Activated CD4-positive, alpha-beta memory T cell treated with anti-CD3 and anti-CD28 coated beads for 36 hours (primary cell): ENCODE measurements at regions of chr3 and their contacts with region 1.

Region 1: DNA sequence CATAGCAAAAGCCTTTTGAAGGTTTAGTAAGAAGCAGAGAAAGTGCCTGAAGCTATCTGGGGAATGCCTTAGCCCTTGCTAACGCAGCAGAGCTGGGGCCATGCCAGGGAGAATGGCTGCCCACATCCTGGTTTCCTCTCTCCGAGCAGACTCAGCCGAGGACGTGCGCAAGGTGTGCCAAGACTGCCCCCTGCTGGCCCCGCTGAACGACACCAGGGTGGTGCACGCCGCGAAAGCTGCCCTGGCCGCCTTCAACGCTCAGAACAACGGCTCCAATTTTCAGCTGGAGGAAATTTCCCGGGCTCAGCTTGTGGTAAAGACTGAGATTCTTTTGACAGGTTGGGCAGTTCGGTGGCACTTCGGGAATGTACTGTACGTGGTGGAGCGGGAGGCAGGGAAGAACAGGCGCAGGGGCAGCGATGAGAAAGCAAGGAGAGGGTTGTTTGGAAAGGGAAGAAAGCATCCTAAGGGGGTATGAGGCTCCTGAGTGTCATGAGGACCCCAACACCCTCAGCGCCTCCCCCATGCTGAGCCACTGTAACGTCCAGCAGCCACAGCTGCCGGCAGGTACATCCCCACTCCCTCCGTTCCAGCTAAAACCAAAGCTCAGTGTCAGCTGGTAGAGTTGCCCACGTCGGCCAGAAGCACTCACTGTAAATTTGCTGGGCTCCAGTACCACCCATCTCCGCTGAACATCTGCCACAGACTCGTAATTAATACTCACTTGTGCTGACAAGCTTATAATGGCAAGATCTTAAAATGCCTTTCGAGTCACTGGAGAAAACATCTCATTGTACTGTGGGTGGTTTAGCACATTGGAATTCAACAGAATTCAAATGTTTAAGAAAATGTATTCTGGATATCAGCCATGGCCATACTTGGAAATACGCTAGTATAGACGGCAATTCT is 4.4 kb downstream of the AHSG start:
- DNase-seq: peak; percentile 95
- H3K4me3 Mint-ChIP-seq: peak overlapping the region; percentile 62
- H3K27ac Mint-ChIP-seq: peak overlapping the region; percentile 70
- H3K4me1 Mint-ChIP-seq: peaks cover 20% of the 10 kb centered on the region
- H3K27me3 Mint-ChIP-seq: peaks cover 24% of the 10 kb centered on the region

Region 2: GRCh38 chr3:185942907-185943759 is 674.2 kb before region 1 on chr3:
- CTCF ChIA-PET with region 1: interaction called, 26 read pairs
- POLR2A ChIA-PET with region 1: interaction called, 4 read pairs
- intact Hi-C with region 1: no loop called
- DNase-seq: peak; percentile 91
- H3K4me3 Mint-ChIP-seq: no peak overlapping the region
- H3K27ac Mint-ChIP-seq: no peak overlapping the region
- H3K4me1 Mint-ChIP-seq: peaks cover 14% of the 10 kb centered on the region
- H3K27me3 Mint-ChIP-seq: no peaks in the 10 kb centered on the region

Region 3: DNA sequence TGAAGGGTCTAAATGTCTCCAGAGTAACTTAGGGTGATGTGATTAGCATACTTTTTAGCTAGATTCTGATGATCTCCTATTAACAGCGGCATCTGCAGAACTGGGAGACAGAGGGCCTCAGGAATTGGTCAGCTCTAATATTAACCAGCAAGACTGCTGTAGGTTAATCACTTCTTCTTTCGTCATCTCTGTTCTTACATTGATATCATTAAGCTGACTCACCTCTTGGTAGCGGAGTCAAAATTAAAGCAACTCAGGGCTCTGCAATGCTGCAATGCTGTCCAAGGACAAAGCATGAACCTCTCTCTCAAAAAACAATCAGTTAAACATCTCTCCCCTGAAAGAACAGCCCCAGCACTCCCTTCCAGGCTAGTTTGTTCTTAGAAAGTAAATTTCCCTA is 621.9 kb before region 1 on chr3:
- CTCF ChIA-PET with region 1: interaction called, 10 read pairs
- POLR2A ChIA-PET with region 1: no interaction called
- intact Hi-C with region 1: no loop called
- DNase-seq: no peak
- H3K4me3 Mint-ChIP-seq: no peak overlapping the region
- H3K27ac Mint-ChIP-seq: no peak overlapping the region
- H3K4me1 Mint-ChIP-seq: no peaks in the 10 kb centered on the region
- H3K27me3 Mint-ChIP-seq: peaks cover 7% of the 10 kb centered on the region

Region 4: GRCh38 chr3:186413615-186414415 is 203.5 kb before region 1 on chr3:
- CTCF ChIA-PET with region 1: no interaction called
- POLR2A ChIA-PET with region 1: no interaction called
- intact Hi-C with region 1: loop called (anchors 10 kb)
- DNase-seq: peak; percentile 61
- H3K4me3 Mint-ChIP-seq: peak overlapping the region; percentile 55
- H3K27ac Mint-ChIP-seq: no peak overlapping the region
- H3K4me1 Mint-ChIP-seq: peaks cover 45% of the 10 kb centered on the region
- H3K27me3 Mint-ChIP-seq: no peaks in the 10 kb centered on the region

Region 5: GRCh38 chr3:186589856-186590579 is 27.3 kb before region 1 on chr3:
- CTCF ChIA-PET with region 1: interaction called, 20 read pairs
- POLR2A ChIA-PET with region 1: no interaction called
- intact Hi-C with region 1: loop called (anchors 2 kb)
- DNase-seq: peak; percentile 29
- H3K4me3 Mint-ChIP-seq: no peak overlapping the region
- H3K27ac Mint-ChIP-seq: peak overlapping the region; percentile 26
- H3K4me1 Mint-ChIP-seq: peaks cover 22% of the 10 kb centered on the region
- H3K27me3 Mint-ChIP-seq: no peaks in the 10 kb centered on the region

Region 6: DNA sequence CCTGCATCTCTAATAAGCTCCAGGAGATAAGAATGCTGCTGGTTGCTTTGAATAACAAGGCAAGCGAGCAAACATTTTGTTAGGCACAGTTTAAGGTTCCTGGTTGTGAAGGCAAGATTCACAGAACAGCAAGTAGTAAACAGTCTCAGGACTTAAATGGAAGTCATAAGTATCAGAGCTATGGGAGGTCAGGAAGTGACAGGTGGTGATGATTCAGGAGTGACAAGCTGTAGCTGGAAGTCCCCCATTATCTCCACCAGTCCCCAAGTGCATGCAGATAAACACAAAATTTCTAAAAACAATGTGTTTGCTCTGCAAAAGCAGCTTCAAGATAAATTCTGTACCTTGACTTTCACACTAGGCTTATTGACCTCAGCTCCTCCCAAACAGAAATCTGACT is 26.2 kb after region 1 on chr3:
- CTCF ChIA-PET with region 1: interaction called, 25 read pairs
- POLR2A ChIA-PET with region 1: interaction called, 3 read pairs
- intact Hi-C with region 1: no loop called
- DNase-seq: peak; percentile 36
- H3K4me3 Mint-ChIP-seq: no peak overlapping the region
- H3K27ac Mint-ChIP-seq: no peak overlapping the region
- H3K4me1 Mint-ChIP-seq: peaks cover 23% of the 10 kb centered on the region
- H3K27me3 Mint-ChIP-seq: peaks cover 18% of the 10 kb centered on the region

Region 7: DNA sequence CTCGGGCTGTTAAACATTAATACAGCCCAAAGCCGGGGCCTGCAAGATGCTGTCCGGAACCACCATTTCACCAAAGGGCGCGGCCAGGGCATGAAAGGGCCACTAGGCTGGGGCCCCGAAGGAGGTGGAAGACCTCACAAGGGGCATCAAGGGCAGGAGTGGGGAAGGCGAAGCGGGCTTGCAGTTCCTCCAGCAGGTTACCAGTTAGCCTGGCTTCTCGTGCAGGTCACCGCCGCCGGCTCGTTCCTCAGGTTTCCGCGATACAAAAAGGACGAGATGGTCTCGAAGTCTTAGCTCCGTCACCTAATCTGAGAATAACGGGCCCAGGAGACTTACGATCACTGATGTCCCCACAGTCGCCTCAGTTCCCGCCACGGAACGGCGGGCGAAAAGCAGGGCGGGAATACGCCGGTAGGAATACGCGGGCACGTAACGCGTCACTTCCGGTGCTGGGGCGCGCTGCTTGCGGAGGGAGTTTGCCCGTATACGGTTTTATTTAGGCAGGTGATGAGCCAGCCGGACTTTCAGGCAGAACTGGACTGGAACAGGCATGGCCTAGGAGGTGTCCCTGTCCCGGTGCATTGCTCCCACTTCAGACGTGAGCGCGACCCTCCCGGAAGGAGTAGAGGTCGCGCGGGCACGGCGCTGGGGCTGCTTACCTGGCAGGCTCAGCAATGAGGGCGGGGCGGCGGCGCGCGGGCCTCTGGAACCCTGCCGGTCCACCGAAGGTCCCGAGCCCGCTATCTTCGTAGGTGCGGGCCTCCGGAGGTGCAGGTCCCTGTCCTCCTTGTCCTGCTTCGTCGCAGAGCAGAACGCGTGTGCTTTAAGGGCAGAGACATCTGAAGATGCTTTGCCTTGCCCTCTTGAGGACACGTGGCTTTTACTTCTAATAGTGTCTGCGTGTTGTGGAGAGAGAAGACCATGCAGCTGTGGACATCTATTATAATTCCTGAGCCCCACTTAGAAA is 189.1 kb after region 1 on chr3 and contains the start of gene RFC4:
- CTCF ChIA-PET with region 1: interaction called, 20 read pairs
- POLR2A ChIA-PET with region 1: no interaction called
- intact Hi-C with region 1: no loop called
- DNase-seq: peak; percentile 91
- H3K4me3 Mint-ChIP-seq: peak within 1 kb of the TSS; percentile 93
- H3K27ac Mint-ChIP-seq: peak within 1 kb of the TSS; percentile 93
- H3K4me1 Mint-ChIP-seq: peaks cover 24% of the 10 kb centered on the region
- H3K27me3 Mint-ChIP-seq: no peaks in the 10 kb centered on the region
- total RNA-seq, gene RFC4: 118 to 127 TPM